PC-9 (cell line): ENCODE measurements at regions of chr3 and their contacts with region 1.

Region 1: DNA sequence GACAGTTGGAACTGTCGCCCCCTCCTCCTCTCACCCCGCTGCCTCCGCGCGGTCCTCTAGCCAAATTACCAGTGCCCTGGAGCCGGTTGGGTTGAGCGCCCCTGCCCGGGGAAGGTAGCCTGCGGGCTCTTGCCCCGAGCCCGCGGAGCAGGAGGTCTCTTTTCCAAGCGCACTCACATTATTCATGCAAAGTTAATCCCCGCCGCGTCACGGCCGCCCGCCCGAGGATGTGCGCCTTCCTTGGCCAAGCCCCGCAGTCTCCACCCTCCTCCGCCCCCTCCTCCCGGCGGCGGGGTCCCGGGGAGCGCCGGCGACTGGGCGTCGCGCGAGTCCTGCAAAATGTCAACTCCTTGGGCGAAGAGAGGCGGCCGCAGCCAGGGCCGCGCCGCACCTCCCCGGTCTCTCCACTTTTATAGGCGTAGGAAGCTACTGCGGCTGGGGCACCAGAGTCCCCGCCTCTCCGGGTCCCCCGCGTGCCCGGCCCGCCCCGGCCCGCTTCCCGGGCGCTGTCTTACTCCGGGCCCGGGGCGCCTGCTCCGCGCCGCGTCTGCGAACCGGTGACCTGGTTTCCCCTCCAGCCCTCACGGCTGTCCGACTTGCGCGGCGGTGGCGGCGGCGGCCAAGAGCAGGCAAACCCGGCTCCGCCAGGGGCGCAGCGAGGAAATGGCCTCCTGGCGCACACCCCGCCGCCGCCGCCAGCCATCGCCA is at the start of gene THRB:
- DNase-seq: peak; percentile 49 to 75
- H3K4me3 ChIP-seq: peak within 1 kb of the TSS; percentile 65
- H3K27ac ChIP-seq: peak within 1 kb of the TSS; percentile 89
- H3K4me1 ChIP-seq: peaks cover 46% of the 10 kb centered on the region
- H3K27me3 ChIP-seq: no peaks in the 10 kb centered on the region
- CTCF ChIP-seq: peak; percentile 36; the same call in 1 of the 2 replicates
- total RNA-seq, gene THRB: 9.7 and 11.2 TPM in 2 replicates

Region 2: DNA sequence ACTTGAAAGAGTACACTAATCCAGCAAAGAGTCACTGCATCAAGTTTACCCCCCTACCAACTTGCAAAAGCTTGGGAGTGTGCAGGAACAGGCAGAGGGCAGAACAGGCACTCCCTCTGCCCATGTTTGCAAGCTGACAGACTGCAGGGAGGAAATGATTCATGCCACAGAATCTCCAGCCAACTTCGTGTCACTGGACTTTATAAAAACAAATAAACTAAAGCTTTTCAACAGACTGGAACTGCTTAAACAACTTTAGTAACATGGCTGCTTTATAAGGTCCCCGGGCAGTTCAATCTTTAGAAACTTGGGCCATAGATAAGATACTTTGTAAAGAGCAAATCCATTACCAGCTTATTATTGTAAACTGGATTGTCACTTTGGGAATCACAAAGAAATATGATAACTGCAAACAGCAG is 129.6 kb before region 1 on chr3:
- CTCF ChIA-PET with region 1: no interaction called
- POLR2A ChIA-PET with region 1: interaction called, 3 read pairs
- intact Hi-C with region 1: loop called (anchors 1 kb)
- DNase-seq: peak; percentile 62 to 90
- H3K4me3 ChIP-seq: no peak overlapping the region; the same call in 1 of the 2 replicates
- H3K27ac ChIP-seq: peak overlapping the region; percentile 69
- H3K4me1 ChIP-seq: peaks cover 40% of the 10 kb centered on the region
- H3K27me3 ChIP-seq: no peaks in the 10 kb centered on the region
- CTCF ChIP-seq: no peak

Region 3: GRCh38 chr3:24389108-24390090 is 105.4 kb before region 1 on chr3:
- CTCF ChIA-PET with region 1: no interaction called
- POLR2A ChIA-PET with region 1: no interaction called
- intact Hi-C with region 1: no loop called
- DNase-seq: peak in 1 of 2 experiments; percentile 43
- H3K4me3 ChIP-seq: no peak overlapping the region
- H3K27ac ChIP-seq: peak overlapping the region; percentile 44
- H3K4me1 ChIP-seq: peaks cover 32% of the 10 kb centered on the region
- H3K27me3 ChIP-seq: no peaks in the 10 kb centered on the region
- CTCF ChIP-seq: no peak

Region 4: DNA sequence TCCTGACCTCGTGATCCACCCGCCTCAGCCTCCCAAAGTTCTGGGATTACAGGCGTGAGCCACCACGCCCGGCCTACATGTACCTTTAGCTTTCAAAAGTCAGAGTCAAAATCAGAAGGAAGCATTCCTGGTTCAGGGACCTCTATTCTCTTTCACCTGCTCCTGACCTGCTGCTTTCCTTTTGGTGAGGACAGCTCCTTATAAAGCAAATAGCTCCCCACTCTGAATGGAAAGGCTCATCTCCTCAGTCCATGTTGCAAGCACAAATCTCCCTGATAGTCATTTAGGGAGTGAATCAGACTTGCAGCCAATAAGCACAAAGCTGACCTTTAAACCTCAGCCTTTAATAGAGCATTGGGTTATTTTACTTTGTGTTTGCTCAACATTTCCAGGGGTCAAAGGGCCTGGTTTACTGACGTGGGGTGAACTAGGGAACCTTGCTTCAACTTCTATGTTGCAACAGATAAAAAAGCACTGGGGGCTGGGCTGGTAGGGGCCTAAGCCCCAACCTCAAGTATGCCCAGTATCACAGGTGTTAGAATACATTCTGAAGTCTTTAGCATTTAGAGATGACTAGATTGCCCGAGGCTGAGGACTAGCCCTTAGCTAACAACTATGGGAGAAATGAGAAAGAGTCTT is 43.2 kb before region 1 on chr3:
- CTCF ChIA-PET with region 1: interaction called, 5 read pairs
- POLR2A ChIA-PET with region 1: no interaction called
- intact Hi-C with region 1: loop called (anchors 2 kb)
- DNase-seq: peak; percentile 37 to 91
- H3K4me3 ChIP-seq: 0 out of 2 replicates have a peak overlapping the region, but pooled peaks have one; percentile 27
- H3K27ac ChIP-seq: peak overlapping the region; percentile 80
- H3K4me1 ChIP-seq: peaks cover 57% of the 10 kb centered on the region
- H3K27me3 ChIP-seq: no peaks in the 10 kb centered on the region
- CTCF ChIP-seq: no peak

Region 5: DNA sequence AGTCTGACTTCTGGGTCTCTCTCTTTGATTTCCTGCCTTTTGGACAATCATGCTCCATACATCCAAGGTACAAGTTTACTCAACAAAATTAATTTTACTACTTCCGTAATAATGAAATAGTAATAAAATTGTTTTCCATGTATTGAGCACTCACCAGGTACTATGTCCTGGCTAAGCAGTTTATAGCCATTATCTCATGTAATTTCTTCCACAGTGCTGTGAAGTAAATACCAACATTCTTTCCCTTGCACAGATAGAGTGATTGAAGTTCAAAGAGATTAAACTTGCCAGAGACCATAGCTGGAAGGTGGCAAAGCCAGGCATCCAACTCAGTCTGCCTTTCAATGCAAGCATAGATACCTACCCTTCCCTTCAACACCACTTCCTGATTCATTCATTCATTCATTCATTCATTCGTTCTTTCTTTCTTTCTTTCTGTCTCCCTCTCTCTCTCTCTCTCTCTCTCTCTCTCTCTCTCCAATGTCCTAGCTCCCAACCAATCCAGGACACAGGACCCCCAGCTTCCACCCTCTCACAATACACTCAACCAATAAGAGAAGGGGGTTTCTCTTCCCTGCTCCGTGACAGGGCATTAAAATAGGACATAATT is 12.6 kb before region 1 on chr3:
- CTCF ChIA-PET with region 1: no interaction called
- POLR2A ChIA-PET with region 1: no interaction called
- intact Hi-C with region 1: no loop called
- DNase-seq: no peak
- H3K4me3 ChIP-seq: no peak overlapping the region
- H3K27ac ChIP-seq: no peak overlapping the region
- H3K4me1 ChIP-seq: 0 out of 2 replicates have a peak, but pooled peaks cover 6% of the 10 kb centered on the region
- H3K27me3 ChIP-seq: no peaks in the 10 kb centered on the region
- CTCF ChIP-seq: no peak

Region 6: GRCh38 chr3:24598695-24599470 is 104.1 kb after region 1 on chr3:
- CTCF ChIA-PET with region 1: no interaction called
- POLR2A ChIA-PET with region 1: interaction called, 4 read pairs
- intact Hi-C with region 1: loop called (anchors 5 kb)
- DNase-seq: peak; percentile 26 to 59
- H3K4me3 ChIP-seq: 0 out of 2 replicates have a peak overlapping the region, but pooled peaks have one; percentile 13
- H3K27ac ChIP-seq: peak overlapping the region; percentile 70
- H3K4me1 ChIP-seq: peaks cover 24% of the 10 kb centered on the region
- H3K27me3 ChIP-seq: no peaks in the 10 kb centered on the region
- CTCF ChIP-seq: no peak

Region 7: DNA sequence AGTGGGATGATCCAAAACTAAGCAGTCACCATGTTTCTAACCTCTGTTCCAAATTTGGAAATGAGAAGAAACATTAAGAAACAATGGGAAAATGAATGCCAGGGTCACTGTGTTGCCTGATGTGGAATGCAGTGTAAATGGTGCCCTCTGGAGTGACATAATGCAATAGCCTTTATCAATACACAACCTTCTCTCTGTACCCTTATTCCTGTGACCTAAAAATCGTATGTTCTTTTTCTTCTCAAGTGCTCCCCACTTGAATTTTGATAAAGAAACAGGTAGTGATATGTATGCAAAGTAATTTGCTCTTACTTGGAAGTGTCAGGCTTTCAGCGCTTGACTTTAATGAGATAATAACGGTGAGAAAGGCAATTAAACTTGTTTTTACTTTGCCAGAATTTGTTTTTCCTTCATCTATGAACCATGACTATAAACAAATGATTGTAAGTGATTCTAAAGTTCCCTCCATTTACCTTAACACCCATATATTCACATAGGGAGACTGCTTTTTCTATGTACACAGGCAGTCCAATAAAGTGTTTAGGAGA is 145.6 kb after region 1 on chr3:
- CTCF ChIA-PET with region 1: no interaction called
- POLR2A ChIA-PET with region 1: no interaction called
- intact Hi-C with region 1: loop called (anchors 2 kb)
- DNase-seq: peak in 1 of 2 experiments; percentile 6
- H3K4me3 ChIP-seq: no peak overlapping the region
- H3K27ac ChIP-seq: no peak overlapping the region
- H3K4me1 ChIP-seq: no peaks in the 10 kb centered on the region
- H3K27me3 ChIP-seq: no peaks in the 10 kb centered on the region
- CTCF ChIP-seq: peak; percentile 65